ENCODE measurements at regions of chr10 and their contacts with region 1.

Region 1: DNA sequence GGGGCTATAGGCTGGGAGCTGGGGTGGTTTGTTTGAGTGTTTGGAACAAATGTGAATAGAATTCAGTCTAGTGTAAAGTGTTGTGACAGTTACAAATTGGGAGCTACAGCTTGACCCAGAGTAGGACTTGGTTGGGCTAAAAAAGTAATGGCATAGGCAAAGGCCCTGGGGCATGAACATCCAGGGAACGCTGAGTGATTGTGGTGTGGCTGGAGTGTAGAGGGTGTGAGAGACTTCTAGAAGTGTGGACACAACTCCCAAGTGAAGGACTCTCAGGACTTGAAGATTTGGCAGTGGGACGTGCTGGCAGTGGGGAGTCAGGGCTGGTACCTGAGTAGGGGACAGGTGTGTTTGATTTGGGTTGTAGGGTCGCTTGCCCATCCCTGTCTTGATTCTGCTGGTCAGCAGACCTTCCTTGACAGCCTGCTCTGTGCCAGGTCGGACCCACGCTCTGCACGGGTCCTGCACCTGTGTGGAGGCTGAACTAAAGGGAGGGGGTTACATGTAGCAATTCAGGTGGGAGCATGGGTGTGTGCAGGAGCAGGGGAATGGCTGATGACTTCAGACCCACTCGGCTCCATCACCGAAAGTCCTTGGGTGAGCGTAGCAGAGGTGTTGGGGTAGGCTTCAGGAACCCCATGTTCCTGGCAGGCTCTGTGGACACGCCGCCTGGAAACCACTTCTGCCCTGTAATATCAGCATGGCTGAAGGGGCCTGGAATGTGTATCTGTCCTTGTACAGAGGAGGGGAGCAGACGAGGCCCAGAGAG is 43.3 kb downstream of the ZMIZ1 start:
- DNase-seq: no peak
- ATAC-seq: no peak
- H3K4me3 ChIP-seq: no peak overlapping the region
- H3K4me3 Mint-ChIP-seq: no peak overlapping the region
- H3K27ac ChIP-seq: no peak overlapping the region
- H3K27ac Mint-ChIP-seq: no peak overlapping the region
- H3K4me1 ChIP-seq: peaks cover 8 to 16% of the 10 kb centered on the region in 2 donors
- H3K4me1 Mint-ChIP-seq: peaks cover 17% of the 10 kb centered on the region
- H3K27me3 ChIP-seq: peaks cover 0 to 8% (median 3%) of the 10 kb centered on the region in 4 experiments
- H3K27me3 Mint-ChIP-seq: peaks cover 20% of the 10 kb centered on the region
- CTCF ChIP-seq: no peak

Region 2: DNA sequence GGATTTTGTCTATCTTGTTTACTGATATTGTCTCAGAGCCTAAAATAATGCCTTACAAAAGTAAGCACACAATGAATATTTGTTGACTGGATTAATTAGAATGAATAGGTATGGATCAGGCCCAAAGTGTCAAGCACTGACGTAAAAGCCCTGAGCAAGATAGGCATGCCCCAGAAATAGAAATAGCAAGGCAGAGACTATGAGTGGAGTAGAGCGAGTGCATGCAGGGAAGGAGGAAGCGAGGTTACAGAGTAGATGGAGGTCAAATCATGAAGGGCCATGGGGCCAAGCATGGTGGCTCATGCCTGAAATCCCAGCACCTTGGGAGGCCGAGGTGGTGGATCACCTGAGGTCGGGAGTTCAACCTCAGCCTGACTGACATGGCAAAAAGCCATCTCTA is 888.5 kb after region 1 on chr10:
- CTCF ChIA-PET with region 1: no interaction called
- POLR2A ChIA-PET with region 1: interaction called, 11 read pairs
- intact Hi-C with region 1: no loop called
- DNase-seq: no peak
- ATAC-seq: no peak
- H3K4me3 ChIP-seq: no peak overlapping the region
- H3K4me3 Mint-ChIP-seq: no peak overlapping the region
- H3K27ac ChIP-seq: no peak overlapping the region
- H3K27ac Mint-ChIP-seq: no peak overlapping the region
- H3K4me1 ChIP-seq: no peaks in the 10 kb centered on the region
- H3K4me1 Mint-ChIP-seq: no peaks in the 10 kb centered on the region
- H3K27me3 ChIP-seq: peaks cover 0 to 10% (median 1%) of the 10 kb centered on the region in 4 experiments
- H3K27me3 Mint-ChIP-seq: peaks cover 20% of the 10 kb centered on the region
- CTCF ChIP-seq: no peak

Measured in B cell (primary cell).